Activated CD8-positive, alpha-beta T cell treated with anti-CD3 and anti-CD28 coated beads, Interleukin-2, amount 10 ng/mL, durations not matched to agents 7 days and 5 days (primary cell): ENCODE measurements at regions of chr4 and their contacts with region 1.

Region 1: DNA sequence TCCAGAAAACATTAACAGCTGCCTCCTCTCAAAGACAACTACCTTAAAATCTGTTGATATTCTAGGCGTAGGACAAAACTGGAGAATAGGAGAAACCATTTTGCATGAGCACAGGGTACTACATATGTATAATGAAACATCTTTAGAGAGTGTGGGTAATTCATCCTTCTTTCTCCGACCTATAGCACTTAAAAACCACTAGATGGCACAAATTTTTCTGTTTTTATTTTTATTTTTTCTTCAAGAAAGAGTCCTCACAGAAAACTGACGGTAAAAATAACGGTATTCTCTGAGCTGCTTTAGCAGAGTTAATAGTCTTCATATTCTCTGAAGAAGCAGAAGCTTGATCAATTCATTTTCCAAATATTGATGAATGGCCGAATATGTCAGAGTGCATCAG is 14.6 kb downstream of the SMIM31 start:
- DNase-seq: no peak
- ATAC-seq: no peak
- H3K4me3 Mint-ChIP-seq: no peak overlapping the region
- H3K27ac Mint-ChIP-seq: no peak overlapping the region
- H3K4me1 Mint-ChIP-seq: no peaks in the 10 kb centered on the region
- H3K27me3 Mint-ChIP-seq: peaks cover 8% of the 10 kb centered on the region

Region 2: DNA sequence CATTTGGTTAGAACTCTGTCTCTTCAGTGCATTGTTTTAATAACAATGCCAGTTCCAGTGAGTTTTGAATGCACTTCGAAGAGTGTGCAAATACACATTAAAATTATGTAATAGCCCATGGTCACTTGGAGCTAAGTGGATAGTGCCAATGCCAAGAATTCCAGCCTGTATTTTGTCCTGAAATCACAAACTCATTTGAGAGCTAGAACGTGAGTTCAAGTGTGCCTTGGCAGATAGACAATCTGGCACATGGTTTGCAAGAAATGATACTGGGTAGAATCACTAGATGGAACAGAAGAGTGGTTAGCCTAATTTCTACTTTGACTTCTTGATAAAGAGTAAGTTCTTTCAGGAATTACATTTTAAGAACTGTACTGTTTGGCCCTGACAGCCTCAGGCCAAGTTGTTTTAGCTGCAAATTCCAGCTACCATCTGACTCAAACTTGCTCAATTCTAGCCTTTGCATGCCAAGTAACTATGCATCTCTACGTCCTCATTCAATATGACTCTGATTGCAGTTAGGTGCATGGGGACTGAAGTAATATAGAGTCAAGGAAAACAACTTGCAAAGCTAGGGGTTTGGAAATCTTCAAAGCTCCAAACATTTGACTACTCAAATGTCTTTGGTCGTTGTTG is 146.5 kb before region 1 on chr4:
- CTCF ChIA-PET with region 1: no interaction called
- POLR2A ChIA-PET with region 1: no interaction called
- DNase-seq: no peak
- ATAC-seq: no peak
- H3K4me3 Mint-ChIP-seq: no peak overlapping the region
- H3K27ac Mint-ChIP-seq: no peak overlapping the region
- H3K4me1 Mint-ChIP-seq: no peaks in the 10 kb centered on the region
- H3K27me3 Mint-ChIP-seq: no peaks in the 10 kb centered on the region

Region 3: DNA sequence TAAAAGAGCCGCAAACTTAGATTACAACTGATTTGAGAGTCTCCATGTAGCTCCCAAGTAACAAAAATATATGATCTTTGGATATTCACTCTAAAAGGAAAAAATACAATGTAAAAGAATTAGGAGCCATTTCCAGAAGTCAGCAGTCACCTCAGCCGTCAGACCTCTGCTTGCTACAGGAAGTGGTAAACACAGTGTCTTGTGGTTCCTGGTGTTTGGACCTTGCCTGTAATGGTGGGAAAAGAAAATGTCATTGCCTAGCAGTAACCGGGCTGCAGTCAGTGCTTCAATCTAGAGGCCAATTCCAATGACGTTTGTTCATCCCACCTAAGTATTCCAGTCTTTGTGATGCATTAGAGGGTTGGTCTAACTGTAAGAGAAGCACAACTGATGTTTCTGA is 43.5 kb before region 1 on chr4:
- CTCF ChIA-PET with region 1: no interaction called
- POLR2A ChIA-PET with region 1: no interaction called
- DNase-seq: peak; percentile 33
- ATAC-seq: no peak
- H3K4me3 Mint-ChIP-seq: no peak overlapping the region
- H3K27ac Mint-ChIP-seq: no peak overlapping the region
- H3K4me1 Mint-ChIP-seq: peaks cover 11% of the 10 kb centered on the region
- H3K27me3 Mint-ChIP-seq: peaks cover 20% of the 10 kb centered on the region

Region 4: GRCh38 chr4:164753872-164754488 is 14.5 kb before region 1 on chr4 and contains the start of gene SMIM31:
- CTCF ChIA-PET with region 1: no interaction called
- POLR2A ChIA-PET with region 1: no interaction called
- DNase-seq: no peak
- ATAC-seq: no peak
- H3K4me3 Mint-ChIP-seq: no peak within 1 kb of the TSS
- H3K27ac Mint-ChIP-seq: no peak within 1 kb of the TSS
- H3K4me1 Mint-ChIP-seq: no peaks in the 10 kb centered on the region
- H3K27me3 Mint-ChIP-seq: no peaks in the 10 kb centered on the region
- total RNA-seq, gene SMIM31: not detected

Region 5: GRCh38 chr4:164790249-164790648 is 21.7 kb after region 1 on chr4:
- CTCF ChIA-PET with region 1: no interaction called
- POLR2A ChIA-PET with region 1: no interaction called
- DNase-seq: no peak
- ATAC-seq: no peak
- H3K4me3 Mint-ChIP-seq: no peak overlapping the region
- H3K27ac Mint-ChIP-seq: no peak overlapping the region
- H3K4me1 Mint-ChIP-seq: no peaks in the 10 kb centered on the region
- H3K27me3 Mint-ChIP-seq: no peaks in the 10 kb centered on the region

Region 6: DNA sequence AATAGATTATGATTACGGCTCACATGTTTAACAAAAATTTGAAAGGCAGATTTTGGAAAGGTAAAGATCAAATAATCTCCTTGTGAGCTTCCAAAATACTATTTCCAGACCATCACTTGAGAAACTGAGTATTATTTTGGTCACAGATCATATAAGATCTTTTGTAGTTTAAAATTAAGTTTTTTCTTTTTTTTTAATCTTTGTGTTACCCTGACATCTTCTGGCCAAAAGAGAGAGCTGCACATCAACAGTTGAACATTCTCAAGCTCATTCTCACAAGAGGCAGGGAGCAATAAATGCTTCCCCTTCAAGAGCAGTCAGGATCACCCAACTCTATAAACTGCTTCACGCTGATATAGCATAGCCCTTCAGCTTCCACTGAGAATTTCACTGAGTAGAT is 328.3 kb after region 1 on chr4:
- CTCF ChIA-PET with region 1: interaction called, 14 read pairs
- POLR2A ChIA-PET with region 1: no interaction called
- DNase-seq: no peak
- ATAC-seq: no peak
- H3K4me3 Mint-ChIP-seq: no peak overlapping the region
- H3K27ac Mint-ChIP-seq: no peak overlapping the region
- H3K4me1 Mint-ChIP-seq: no peaks in the 10 kb centered on the region
- H3K27me3 Mint-ChIP-seq: no peaks in the 10 kb centered on the region